ENCODE measurements at regions of chr3 and their contacts with region 1.

Region 1: GRCh38 chr3:37967260-37967881 is 23.2 kb upstream of the VILL start:
- DNase-seq: peak; percentile 38 to 81 (median 64)

Region 2: DNA sequence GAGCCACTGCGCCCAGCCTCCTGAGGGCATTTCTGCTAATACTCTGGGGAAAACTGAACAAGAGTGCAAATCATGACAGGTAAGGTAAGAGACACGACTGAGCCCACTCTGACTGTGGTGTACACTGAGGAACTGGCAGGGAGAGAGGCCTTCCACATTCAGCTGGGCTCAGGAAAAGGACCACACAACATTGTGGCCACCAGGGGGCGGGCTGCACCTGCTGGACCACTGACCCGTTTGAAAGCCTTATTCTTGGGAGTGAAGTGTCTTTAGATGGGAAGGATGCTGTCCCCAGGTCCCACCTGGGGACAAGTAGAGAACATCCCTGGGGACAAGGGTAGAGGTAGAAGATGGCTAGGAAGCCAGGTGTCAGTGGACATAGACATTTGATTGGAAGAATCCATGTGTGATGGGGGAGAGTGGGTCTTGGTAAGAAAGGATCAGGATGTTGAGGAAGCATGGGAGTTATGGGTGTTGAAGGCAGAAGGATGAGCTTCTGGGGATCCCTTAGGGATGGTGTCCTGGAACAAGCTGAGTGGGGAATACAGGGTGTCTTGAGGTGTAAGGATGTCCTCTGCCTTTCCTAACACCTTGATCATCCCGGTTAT is 111.9 kb before region 1 on chr3:
- intact Hi-C with region 1: loop called (anchors 5 kb)
- DNase-seq: peak; percentile 58 to 93 (median 86)

Measured in head of caudate nucleus (tissue), 42 donors.